Activated CD8-positive, alpha-beta T cell treated with anti-CD3 and anti-CD28 coated beads, Interleukin-2, amount 10 ng/mL, durations not matched to agents 7 days and 5 days (primary cell): ENCODE measurements at regions of chr9 and their contacts with region 1.

Region 1: DNA sequence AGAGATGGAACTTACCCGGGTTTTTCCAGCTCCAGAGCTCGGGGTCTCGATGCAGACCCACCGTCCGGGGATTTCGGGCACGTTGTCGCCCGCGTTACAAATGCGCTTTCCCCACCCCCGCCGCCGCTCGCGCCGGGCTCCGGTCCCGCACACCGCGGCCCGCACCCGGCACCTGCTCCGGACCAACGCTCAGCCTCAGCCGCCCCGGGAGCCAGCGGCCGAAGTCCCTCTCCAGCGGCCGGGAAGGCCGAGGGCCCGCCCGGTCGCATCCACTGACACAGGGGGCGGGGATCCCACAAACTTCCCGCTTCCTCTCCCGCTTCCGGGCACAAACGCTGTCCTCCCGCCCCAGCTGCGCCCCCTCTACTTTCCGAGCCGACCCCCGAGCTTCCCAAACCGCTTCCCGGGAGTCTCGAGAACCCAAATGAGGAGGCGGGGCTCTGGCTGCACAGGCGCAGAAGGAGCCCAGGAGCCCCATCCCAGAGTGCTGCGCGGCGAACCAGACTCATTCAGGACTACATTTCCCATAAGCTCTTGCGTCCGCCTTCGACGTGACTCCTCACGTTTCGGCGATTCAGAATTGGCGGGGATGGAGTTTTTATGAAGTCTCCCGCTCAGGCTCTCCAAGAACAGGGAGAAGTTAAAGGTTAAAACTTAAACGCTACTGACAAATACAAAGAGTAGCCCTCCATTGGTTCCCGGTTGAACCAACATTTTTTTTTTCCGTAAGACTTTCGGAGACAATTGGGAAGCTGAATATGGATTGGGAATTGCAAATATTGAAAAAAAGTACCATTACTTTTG is at the start of gene ZNF782:
- DNase-seq: peak; percentile 90
- ATAC-seq: peak; percentile 95
- H3K4me3 Mint-ChIP-seq: peak within 1 kb of the TSS; percentile 100
- H3K27ac Mint-ChIP-seq: peak within 1 kb of the TSS; percentile 98
- H3K4me1 Mint-ChIP-seq: peaks cover 27% of the 10 kb centered on the region
- H3K27me3 Mint-ChIP-seq: peaks cover 16% of the 10 kb centered on the region
- total RNA-seq, gene ZNF782: 3.9 to 4.3 TPM

Region 2: GRCh38 chr9:96581786-96582185 is 272.5 kb before region 1 on chr9:
- CTCF ChIA-PET with region 1: no interaction called
- POLR2A ChIA-PET with region 1: no interaction called
- DNase-seq: no peak
- ATAC-seq: no peak
- H3K4me3 Mint-ChIP-seq: no peak overlapping the region
- H3K27ac Mint-ChIP-seq: no peak overlapping the region
- H3K4me1 Mint-ChIP-seq: no peaks in the 10 kb centered on the region
- H3K27me3 Mint-ChIP-seq: peaks cover 23% of the 10 kb centered on the region

Region 3: GRCh38 chr9:96875461-96876364 is 21.4 kb after region 1 on chr9:
- CTCF ChIA-PET with region 1: interaction called, 30 read pairs
- POLR2A ChIA-PET with region 1: interaction called, 10 read pairs
- DNase-seq: peak; percentile 70
- ATAC-seq: peak; percentile 83
- H3K4me3 Mint-ChIP-seq: peak overlapping the region; percentile 83
- H3K27ac Mint-ChIP-seq: peak overlapping the region; percentile 76
- H3K4me1 Mint-ChIP-seq: peaks cover 34% of the 10 kb centered on the region
- H3K27me3 Mint-ChIP-seq: peaks cover 42% of the 10 kb centered on the region

Region 4: GRCh38 chr9:97398999-97399758 is 544.9 kb after region 1 on chr9:
- CTCF ChIA-PET with region 1: interaction called, 16 read pairs
- POLR2A ChIA-PET with region 1: no interaction called
- DNase-seq: peak; percentile 65
- ATAC-seq: peak; percentile 45
- H3K4me3 Mint-ChIP-seq: no peak overlapping the region
- H3K27ac Mint-ChIP-seq: no peak overlapping the region
- H3K4me1 Mint-ChIP-seq: peaks cover 27% of the 10 kb centered on the region
- H3K27me3 Mint-ChIP-seq: peaks cover 41% of the 10 kb centered on the region